ENCODE measurements at regions of chr6 and their contacts with region 1.

Region 1: DNA sequence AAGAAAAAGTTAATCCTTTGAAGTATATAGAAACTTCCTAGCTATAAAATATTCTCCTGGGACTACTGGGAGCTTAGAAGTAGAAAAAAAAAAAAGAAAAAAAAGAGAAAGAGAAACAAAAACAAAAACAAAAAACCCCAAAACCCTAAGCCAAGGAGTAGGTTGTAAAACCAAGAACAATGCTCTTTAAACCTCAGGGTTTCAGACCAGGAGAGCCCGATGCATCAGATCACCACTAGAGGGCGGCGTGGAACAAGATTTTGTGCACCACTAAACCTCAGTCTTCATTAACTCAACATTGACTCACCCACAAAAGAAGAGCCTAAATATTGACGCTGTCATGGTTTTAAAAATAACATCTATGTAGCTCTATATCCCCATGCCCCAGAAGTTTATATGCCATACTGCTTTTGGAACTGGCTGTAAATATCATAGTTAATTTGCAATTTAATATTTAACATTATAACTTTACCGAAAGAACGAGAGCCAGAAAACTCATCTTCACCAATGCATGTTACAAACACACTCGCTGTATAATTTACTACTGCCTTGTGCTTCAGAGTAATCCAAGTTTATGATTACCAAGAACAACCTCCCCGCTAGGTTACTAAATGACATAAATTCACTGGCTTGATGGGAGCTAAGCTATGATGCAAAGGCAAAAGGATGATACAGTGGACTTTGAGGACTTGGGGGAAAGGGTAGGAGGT is 19.2 kb downstream of the MCUR1 start:
- DNase-seq: peak; percentile 71
- ATAC-seq: peak; percentile 100
- H3K4me3 ChIP-seq: no peak overlapping the region
- H3K27ac ChIP-seq: no peak overlapping the region
- H3K4me1 ChIP-seq: peaks cover 8% of the 10 kb centered on the region; the same call in 1 of the 2 replicates
- H3K27me3 ChIP-seq: no peaks in the 10 kb centered on the region
- CTCF ChIP-seq: peak; percentile 89 to 97 (median 91); a peak in 5 of 6 replicates
- EP300 ChIP-seq: no peak
- POLR2A ChIP-seq: no peak
- RAD21 ChIP-seq: peak; percentile 89

Region 2: DNA sequence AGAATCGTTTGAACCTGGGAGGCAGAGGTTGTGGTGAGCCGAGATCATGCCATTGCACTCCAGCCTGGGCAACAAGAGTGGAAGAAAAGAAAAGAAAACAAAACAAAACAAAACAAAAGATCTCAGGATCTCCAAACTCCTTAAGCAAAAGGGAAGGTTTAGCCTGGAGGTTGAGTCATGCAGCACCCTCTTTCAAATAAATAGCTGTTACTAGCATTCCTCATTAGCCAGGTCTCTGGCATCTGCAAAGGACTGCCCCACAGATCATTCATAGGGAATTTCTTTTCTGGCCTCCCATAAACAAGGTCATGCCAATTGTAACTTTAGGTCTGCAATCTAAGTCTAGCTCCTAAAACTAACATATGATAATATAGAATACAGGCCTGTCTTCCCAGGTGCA is 1467.8 kb before region 1 on chr6:
- CTCF ChIA-PET with region 1: no interaction called
- POLR2A ChIA-PET with region 1: no interaction called
- RAD21 ChIA-PET with region 1: no interaction called
- SMC1A ChIA-PET with region 1: no interaction called
- in situ Hi-C with region 1: no loop called
- intact Hi-C with region 1: no loop called
- DNase-seq: no peak
- ATAC-seq: no peak
- H3K4me3 ChIP-seq: no peak overlapping the region
- H3K27ac ChIP-seq: no peak overlapping the region
- H3K4me1 ChIP-seq: no peaks in the 10 kb centered on the region
- H3K27me3 ChIP-seq: no peaks in the 10 kb centered on the region
- CTCF ChIP-seq: no peak
- EP300 ChIP-seq: no peak
- POLR2A ChIP-seq: no peak
- RAD21 ChIP-seq: no peak

Region 3: DNA sequence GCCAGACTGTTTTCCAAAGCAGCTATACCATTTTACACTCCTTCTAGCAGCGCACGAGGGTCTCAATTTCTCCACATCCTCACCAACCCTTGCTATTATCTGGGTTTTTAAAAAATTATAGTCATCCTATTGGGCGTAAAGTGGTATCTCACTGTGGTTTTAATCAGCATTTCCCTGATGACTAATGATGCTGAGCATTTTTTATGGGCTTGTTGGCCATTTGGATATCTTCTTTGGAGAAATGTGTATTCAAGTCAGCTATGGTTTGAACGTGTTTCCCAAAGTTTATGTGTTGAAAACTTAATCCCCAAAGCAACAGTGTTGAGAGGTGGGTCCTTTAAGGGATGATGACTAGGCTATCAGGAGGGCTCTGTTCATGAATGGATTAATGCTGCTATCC is 12.5 kb after region 1 on chr6:
- CTCF ChIA-PET with region 1: interaction called, 39 read pairs
- POLR2A ChIA-PET with region 1: no interaction called
- RAD21 ChIA-PET with region 1: interaction called, 7 read pairs
- SMC1A ChIA-PET with region 1: interaction called, 9 read pairs
- in situ Hi-C with region 1: no loop called
- intact Hi-C with region 1: no loop called
- DNase-seq: no peak
- ATAC-seq: no peak
- H3K4me3 ChIP-seq: no peak overlapping the region
- H3K27ac ChIP-seq: no peak overlapping the region
- H3K4me1 ChIP-seq: no peaks in the 10 kb centered on the region
- H3K27me3 ChIP-seq: no peaks in the 10 kb centered on the region
- CTCF ChIP-seq: no peak
- EP300 ChIP-seq: no peak
- POLR2A ChIP-seq: no peak
- RAD21 ChIP-seq: no peak

Region 4: DNA sequence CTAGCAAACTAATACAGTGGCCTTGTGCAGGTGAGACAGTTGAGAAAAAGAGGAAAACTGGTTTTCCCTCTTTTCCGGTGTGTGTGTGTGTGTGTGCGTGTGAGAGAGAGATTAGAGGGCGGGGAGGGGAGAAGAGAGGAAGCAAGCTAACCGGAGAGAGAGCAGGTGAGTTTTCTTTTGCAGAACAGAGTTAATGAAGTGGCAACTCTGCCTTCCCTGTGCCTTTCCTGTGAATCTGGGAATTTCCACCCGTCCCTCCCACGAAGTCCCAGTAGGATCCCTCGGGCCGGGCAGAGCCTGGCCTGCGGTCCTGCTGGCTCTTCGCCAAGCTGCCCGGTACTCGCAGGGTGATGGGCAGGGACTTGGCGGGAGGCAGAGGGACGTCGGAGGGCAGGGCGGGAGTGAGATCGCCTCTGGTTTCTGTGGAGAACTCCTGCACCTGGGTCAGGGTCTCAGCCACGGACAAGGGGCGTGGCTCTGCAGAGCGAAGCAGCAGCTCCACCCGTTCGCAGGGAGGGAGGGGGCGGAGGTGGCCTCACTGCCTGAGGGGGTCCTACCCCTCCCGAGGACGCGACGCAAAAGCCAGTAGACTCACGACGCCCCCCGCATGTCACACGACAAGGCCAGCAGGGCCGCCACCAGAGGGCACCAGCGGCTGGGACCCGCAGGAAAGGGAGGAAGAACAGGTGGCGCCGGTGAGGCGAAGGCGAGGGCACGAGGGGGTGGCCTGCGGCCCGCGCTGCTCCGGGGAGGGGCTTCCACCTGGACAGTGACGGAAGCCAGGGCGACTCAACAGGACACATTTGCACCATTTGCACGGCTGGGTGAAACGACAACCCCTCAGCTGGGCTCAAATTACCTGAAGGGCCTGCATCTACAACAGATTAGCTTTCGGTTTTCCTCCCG is 78.3 kb after region 1 on chr6:
- CTCF ChIA-PET with region 1: interaction called, 6 read pairs
- POLR2A ChIA-PET with region 1: no interaction called
- RAD21 ChIA-PET with region 1: no interaction called
- SMC1A ChIA-PET with region 1: interaction called, 3 read pairs
- in situ Hi-C with region 1: no loop called
- intact Hi-C with region 1: loop called (anchors 5 kb)
- DNase-seq: peak; percentile 5
- ATAC-seq: peak; percentile 87
- H3K4me3 ChIP-seq: peak overlapping the region; percentile 47; the same call in 1 of the 2 replicates
- H3K27ac ChIP-seq: no peak overlapping the region
- H3K4me1 ChIP-seq: peaks cover 5% of the 10 kb centered on the region
- H3K27me3 ChIP-seq: no peaks in the 10 kb centered on the region
- CTCF ChIP-seq: peak; percentile 72 to 80 (median 80)
- EP300 ChIP-seq: no peak
- POLR2A ChIP-seq: no peak
- RAD21 ChIP-seq: peak; percentile 67

Region 5: GRCh38 chr6:13908955-13909381 is 113.8 kb after region 1 on chr6:
- CTCF ChIA-PET with region 1: interaction called, 16 read pairs
- POLR2A ChIA-PET with region 1: no interaction called
- RAD21 ChIA-PET with region 1: interaction called, 10 read pairs
- SMC1A ChIA-PET with region 1: interaction called, 8 read pairs
- in situ Hi-C with region 1: no loop called
- intact Hi-C with region 1: loop called (anchors 2 kb)
- DNase-seq: peak; percentile 27
- ATAC-seq: peak; percentile 91
- H3K4me3 ChIP-seq: no peak overlapping the region
- H3K27ac ChIP-seq: no peak overlapping the region
- H3K4me1 ChIP-seq: no peaks in the 10 kb centered on the region
- H3K27me3 ChIP-seq: no peaks in the 10 kb centered on the region
- CTCF ChIP-seq: peak; percentile 72 to 88 (median 72)
- EP300 ChIP-seq: no peak
- POLR2A ChIP-seq: no peak
- RAD21 ChIP-seq: peak; percentile 93

Region 6: GRCh38 chr6:14046476-14047068 is 251.4 kb after region 1 on chr6:
- CTCF ChIA-PET with region 1: interaction called, 20 read pairs
- POLR2A ChIA-PET with region 1: no interaction called
- RAD21 ChIA-PET with region 1: interaction called, 6 read pairs
- SMC1A ChIA-PET with region 1: interaction called, 13 read pairs
- in situ Hi-C with region 1: no loop called
- intact Hi-C with region 1: loop called (anchors 5 kb)
- DNase-seq: no peak
- ATAC-seq: peak; percentile 94
- H3K4me3 ChIP-seq: no peak overlapping the region
- H3K27ac ChIP-seq: no peak overlapping the region
- H3K4me1 ChIP-seq: no peaks in the 10 kb centered on the region
- H3K27me3 ChIP-seq: peaks cover 2 to 3% of the 10 kb centered on the region in 2 experiments; a peak in 2 of 4 replicates
- CTCF ChIP-seq: peak; percentile 63 to 79 (median 75)
- EP300 ChIP-seq: no peak
- POLR2A ChIP-seq: no peak
- RAD21 ChIP-seq: peak; percentile 64

Region 7: DNA sequence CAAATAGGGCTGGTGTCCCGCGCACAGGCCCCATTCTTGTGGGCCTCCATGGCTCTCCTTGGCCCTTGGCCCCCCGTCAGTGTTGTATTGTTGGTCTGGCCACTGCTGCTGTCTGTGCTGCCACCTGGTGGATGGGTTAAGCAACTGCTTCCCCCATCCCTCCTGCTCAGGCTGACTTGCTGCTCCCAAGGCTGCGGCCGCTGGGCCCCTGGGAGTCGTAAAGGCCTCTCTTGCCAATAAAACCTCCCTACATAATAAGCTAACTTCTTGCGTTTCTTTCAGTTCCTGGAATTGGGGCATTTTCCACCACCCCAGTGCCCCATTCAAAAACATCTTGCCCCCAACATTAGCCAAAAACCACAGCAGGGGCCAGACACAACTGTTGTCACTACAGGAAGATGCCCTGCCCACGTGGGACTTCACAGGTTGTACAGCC is 349.5 kb after region 1 on chr6:
- CTCF ChIA-PET with region 1: interaction called, 5 read pairs
- POLR2A ChIA-PET with region 1: no interaction called
- RAD21 ChIA-PET with region 1: interaction called, 4 read pairs
- SMC1A ChIA-PET with region 1: interaction called, 4 read pairs
- in situ Hi-C with region 1: no loop called
- intact Hi-C with region 1: loop called (anchors 10 kb)
- DNase-seq: peak; percentile 40
- ATAC-seq: peak; percentile 92
- H3K4me3 ChIP-seq: no peak overlapping the region
- H3K27ac ChIP-seq: no peak overlapping the region
- H3K4me1 ChIP-seq: peaks cover 7% of the 10 kb centered on the region; the same call in 1 of the 2 replicates
- H3K27me3 ChIP-seq: no peaks in the 10 kb centered on the region
- CTCF ChIP-seq: peak; percentile 89 to 96 (median 94)
- EP300 ChIP-seq: no peak
- POLR2A ChIP-seq: no peak
- RAD21 ChIP-seq: peak; percentile 90

Measured in GM12878 (cell line).